WTC11 (cell line): ENCODE measurements at regions of chr12 and their contacts with region 1.

Region 1: DNA sequence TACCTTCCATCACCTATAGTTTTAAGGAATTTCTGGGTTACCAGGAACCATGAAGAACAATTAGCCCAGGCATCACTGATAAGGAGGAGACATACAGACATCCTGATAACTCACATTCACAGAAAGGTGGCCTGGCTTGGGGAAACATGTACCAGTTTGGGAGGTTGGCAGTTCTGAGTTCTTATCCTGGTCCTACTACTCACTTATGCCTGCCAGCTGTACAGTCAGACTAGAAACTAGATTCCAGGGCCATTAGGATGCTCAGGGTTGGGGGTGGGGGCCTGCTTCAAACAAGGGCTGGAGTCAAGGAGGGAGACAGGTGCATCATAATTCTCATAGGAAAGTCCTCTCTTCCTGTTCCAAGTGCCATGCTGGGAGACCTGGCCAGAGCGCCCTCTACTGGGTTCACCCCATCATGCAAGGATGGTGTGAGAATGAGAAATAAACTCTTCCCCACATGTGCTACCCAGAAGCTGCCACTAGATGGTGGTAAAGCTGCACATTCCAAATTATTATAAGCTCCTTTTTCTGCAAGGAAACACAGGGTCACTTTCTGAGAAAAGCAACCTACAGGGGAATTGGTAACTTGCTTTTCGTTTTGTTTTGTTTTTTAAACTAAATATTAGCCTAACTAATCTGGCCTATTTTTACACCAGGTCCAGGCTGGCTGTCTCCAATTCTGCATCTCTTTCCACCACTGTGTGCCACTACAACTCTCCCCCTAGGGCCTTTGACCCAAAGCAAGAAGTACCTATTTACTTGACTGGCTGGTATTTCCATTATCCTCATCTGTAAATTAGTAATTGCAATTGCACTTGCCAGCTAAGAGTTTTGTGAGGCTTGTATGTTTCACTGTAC is 14.5 kb downstream of the OAS2 start:
- DNase-seq: peak; percentile 83
- ATAC-seq: peak; percentile 87
- H3K4me3 Mint-ChIP-seq: no peak overlapping the region
- H3K27ac Mint-ChIP-seq: no peak overlapping the region
- H3K4me1 Mint-ChIP-seq: peaks cover 16% of the 10 kb centered on the region
- H3K27me3 Mint-ChIP-seq: peaks cover 8% of the 10 kb centered on the region
- CTCF ChIP-seq: peak; percentile 83

Region 2: GRCh38 chr12:112870267-112870980 is 122.3 kb before region 1 on chr12:
- CTCF ChIA-PET with region 1: no interaction called
- POLR2A ChIA-PET with region 1: no interaction called
- DNase-seq: no peak
- ATAC-seq: no peak
- H3K4me3 Mint-ChIP-seq: no peak overlapping the region
- H3K27ac Mint-ChIP-seq: no peak overlapping the region
- H3K4me1 Mint-ChIP-seq: no peaks in the 10 kb centered on the region
- H3K27me3 Mint-ChIP-seq: peaks cover 15% of the 10 kb centered on the region
- CTCF ChIP-seq: no peak

Region 3: GRCh38 chr12:112900299-112901145 is 92.2 kb before region 1 on chr12:
- CTCF ChIA-PET with region 1: interaction called, 19 read pairs
- POLR2A ChIA-PET with region 1: no interaction called
- DNase-seq: peak; percentile 41
- ATAC-seq: peak; percentile 82
- H3K4me3 Mint-ChIP-seq: no peak overlapping the region
- H3K27ac Mint-ChIP-seq: no peak overlapping the region
- H3K4me1 Mint-ChIP-seq: no peaks in the 10 kb centered on the region
- H3K27me3 Mint-ChIP-seq: no peaks in the 10 kb centered on the region; the same call in 1 of the 2 replicates
- CTCF ChIP-seq: peak; percentile 51

Region 4: DNA sequence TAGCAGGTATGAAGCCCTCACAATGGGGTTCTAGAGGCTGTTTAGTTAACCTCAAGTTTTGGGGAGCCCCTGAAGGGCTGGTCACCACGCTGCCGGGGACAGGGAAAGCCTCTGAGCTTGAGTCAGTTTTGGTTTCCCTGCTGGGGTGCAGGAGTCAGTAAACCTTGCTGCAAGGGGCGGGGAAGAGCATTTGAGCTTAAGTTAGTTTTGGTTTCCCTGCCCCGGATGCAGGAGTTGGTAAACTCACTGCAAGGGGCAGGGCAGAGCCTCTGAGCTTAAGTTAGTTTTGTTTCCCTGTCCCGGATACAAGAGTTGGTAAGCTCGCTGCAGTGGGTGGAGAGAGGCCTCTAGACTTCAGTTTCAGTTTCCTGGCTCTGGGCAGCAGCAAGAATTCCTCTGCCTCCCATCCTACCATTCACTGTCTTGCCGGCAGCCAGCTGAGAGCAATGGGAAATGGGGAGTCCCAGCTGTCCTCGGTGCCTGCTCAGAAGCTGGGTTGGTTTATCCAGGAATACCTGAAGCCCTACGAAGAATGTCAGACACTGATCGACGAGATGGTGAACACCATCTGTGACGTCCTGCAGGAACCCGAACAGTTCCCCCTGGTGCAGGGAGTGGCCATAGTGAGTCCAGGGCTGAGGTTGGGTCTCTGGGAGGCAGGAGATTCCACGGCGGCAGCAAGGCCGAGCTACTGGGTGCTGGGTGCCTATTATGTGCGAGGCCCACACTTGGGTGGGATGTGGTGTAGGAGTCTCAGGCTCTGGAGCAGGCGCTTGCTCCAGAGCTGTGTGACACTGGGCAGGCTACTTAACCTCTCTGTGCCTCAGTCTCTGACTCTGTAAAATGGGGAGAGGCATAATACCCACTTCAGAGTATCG is 14.4 kb before region 1 on chr12 and contains the start of gene OAS2:
- CTCF ChIA-PET with region 1: interaction called, 45 read pairs
- POLR2A ChIA-PET with region 1: no interaction called
- DNase-seq: no peak
- ATAC-seq: peak; percentile 60
- H3K4me3 Mint-ChIP-seq: no peak within 1 kb of the TSS
- H3K27ac Mint-ChIP-seq: no peak within 1 kb of the TSS
- H3K4me1 Mint-ChIP-seq: no peaks in the 10 kb centered on the region
- H3K27me3 Mint-ChIP-seq: no peaks in the 10 kb centered on the region; the same call in 1 of the 2 replicates
- CTCF ChIP-seq: no peak
- total RNA-seq, gene OAS2: 0.27 to 0.48 TPM (median 0.28 TPM) in 3 replicates

Region 5: DNA sequence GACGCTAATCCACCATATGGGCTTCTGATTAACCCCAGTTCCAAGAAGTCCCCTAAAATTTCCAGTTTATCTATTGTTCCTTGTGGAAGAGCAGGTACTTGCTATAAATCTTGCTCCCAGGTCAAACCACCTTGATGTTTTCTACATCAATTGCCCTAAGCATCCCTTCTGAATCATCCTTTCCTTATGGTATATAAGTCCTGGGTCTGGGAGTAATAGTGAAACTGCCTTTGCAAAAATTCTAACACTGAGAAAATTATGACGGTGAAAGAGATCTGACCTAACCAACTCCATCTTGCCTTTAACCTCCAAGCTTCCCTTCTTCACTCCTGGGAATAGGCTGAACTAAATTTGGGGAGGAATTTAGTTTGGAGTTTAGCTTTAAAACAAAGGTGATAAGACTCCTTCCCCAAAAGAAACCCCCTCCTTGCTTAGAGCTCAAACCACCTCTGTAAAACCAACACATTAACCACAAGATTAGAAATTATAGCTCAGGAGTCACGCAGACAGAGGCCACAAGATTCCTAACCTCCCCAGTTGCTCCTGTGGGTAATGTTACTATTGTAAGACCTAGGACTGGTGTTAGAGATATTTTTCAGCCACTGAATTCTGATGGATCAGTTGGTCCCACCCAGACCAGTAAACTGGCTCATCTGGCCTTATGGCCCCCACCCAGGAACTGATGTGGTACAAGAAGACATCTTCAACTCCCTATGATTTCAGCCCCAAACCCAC is 30.0 kb after region 1 on chr12:
- CTCF ChIA-PET with region 1: interaction called, 22 read pairs
- POLR2A ChIA-PET with region 1: no interaction called
- DNase-seq: no peak
- ATAC-seq: no peak
- H3K4me3 Mint-ChIP-seq: no peak overlapping the region
- H3K27ac Mint-ChIP-seq: no peak overlapping the region
- H3K4me1 Mint-ChIP-seq: no peaks in the 10 kb centered on the region
- H3K27me3 Mint-ChIP-seq: peaks cover 5% of the 10 kb centered on the region; the same call in 1 of the 2 replicates
- CTCF ChIP-seq: no peak

Region 6: DNA sequence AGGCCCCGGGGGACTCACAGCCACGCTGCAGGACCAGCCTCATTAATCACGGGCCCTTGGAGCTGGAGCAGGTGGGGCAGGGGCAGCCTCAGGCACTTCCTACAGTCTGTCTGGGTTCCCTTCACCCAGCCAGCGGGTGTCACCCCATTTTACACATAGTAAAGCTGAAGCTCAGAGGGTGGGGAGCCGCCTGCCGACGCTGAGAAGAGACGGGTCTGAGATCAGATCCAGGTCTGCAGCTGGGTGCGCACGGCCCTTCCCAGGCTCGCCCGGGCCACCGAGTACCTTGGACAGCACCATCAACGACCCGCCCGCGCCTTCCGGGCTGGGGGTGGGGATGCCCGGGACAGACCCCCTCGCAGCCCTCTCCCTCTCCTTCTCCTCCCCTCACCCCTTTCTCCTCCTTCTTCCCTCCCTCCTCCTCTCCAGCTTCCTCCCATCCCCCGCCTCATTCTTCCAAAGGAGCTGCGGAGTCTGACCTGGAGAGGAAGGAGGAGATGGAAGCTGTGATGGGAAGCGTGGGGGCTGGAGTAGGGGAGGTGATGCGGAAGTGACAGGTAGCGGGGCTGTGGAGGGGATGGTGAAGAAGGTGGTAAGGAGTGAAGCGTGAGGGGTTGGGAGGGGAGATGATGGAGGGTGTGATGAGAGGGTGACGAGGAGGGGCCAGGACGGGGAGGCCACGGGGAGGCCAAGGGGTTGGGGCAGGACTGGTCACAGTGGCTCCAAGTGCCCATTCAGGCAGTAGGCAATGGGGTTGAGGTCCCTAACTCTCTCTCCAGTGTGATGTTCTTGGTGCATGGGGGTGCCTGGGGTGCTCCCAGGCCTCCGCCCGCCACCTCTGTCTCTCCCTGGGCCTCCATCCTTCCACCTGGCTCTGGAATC is 72.6 kb after region 1 on chr12:
- CTCF ChIA-PET with region 1: interaction called, 15 read pairs
- POLR2A ChIA-PET with region 1: no interaction called
- DNase-seq: peak; percentile 77
- ATAC-seq: peak; percentile 82
- H3K4me3 Mint-ChIP-seq: peak overlapping the region; percentile 47
- H3K27ac Mint-ChIP-seq: no peak overlapping the region
- H3K4me1 Mint-ChIP-seq: peaks cover 31% of the 10 kb centered on the region
- H3K27me3 Mint-ChIP-seq: peaks cover 3% of the 10 kb centered on the region; the same call in 1 of the 2 replicates
- CTCF ChIP-seq: no peak

Region 7: DNA sequence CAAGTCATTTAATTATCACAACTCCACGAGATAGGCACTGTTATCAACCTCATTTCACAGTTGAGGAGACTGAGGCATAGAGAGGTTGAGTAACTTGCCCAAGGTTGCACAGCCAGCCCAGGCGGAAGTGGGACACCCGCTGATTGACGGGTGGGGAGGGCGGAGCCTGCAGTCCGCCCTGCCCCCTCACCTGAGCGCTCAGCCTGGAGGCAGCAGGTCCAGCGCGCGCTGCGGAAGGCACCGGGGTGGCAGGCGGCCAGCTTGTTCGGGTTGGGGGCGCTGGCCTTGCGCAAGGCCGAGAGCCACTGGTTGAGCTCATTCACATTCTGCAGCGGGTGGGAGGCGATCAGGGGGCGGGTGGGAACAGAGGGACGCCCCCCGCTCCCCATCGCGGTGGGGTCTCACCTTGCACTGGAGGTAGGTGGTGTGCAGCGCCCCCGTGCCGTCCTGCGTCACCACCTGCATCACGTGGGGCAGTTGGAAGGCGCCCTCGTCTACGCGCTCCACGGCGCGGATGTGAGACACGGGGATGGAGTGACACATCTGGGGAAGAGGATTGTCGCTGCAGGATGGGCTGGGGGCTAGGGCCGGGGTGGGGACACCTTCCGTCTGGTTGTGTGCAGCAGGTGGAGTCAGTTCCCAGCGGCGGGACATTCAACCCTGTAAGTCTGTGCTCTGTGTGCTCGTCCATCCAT is 111.1 kb after region 1 on chr12:
- CTCF ChIA-PET with region 1: interaction called, 16 read pairs
- POLR2A ChIA-PET with region 1: no interaction called
- DNase-seq: peak; percentile 85
- ATAC-seq: peak; percentile 95
- H3K4me3 Mint-ChIP-seq: peak overlapping the region; percentile 71
- H3K27ac Mint-ChIP-seq: no peak overlapping the region
- H3K4me1 Mint-ChIP-seq: peaks cover 2% of the 10 kb centered on the region
- H3K27me3 Mint-ChIP-seq: no peaks in the 10 kb centered on the region; the same call in 1 of the 2 replicates
- CTCF ChIP-seq: no peak

Region 8: GRCh38 chr12:113161414-113162016 is 168.7 kb after region 1 on chr12:
- CTCF ChIA-PET with region 1: interaction called, 16 read pairs
- POLR2A ChIA-PET with region 1: no interaction called
- DNase-seq: peak; percentile 97
- ATAC-seq: peak; percentile 95
- H3K4me3 Mint-ChIP-seq: peak overlapping the region; percentile 49
- H3K27ac Mint-ChIP-seq: peak overlapping the region; percentile 83
- H3K4me1 Mint-ChIP-seq: peaks cover 28% of the 10 kb centered on the region
- H3K27me3 Mint-ChIP-seq: no peaks in the 10 kb centered on the region
- CTCF ChIP-seq: no peak